Posterior vena cava (tissue), 2 donors: ENCODE measurements at regions of chr3 and their contacts with region 1.

Region 1: GRCh38 chr3:112582244-112582874 is 20.5 kb downstream of the SLC35A5 start:
- DNase-seq: no peak

Region 2: DNA sequence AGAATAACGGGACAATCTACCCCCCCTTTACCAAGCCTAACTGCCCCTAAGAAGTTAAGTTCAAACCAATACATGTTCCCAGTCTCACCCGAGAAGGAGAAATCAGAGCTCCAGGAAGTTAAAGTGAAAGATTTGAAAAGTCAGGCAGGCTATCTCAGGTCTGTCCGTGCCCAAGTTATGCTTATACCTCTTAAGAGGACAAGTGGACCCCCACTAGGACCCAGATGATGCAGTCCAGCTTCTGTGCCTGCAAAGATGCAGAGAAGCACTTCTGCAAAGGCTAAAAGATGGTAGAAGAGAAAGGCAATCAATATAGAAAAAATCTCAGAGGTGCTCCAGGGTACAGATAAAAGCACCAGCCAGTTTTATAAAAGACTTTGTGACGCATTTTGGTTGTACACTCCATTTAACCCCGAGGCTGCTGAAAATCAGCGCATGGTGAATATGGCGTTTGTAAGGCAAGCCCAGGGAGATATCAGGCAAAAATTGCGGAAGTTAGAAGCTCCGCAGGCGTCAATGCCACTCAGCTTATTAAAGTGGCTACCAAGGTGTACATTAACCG is 278.5 kb before region 1 on chr3:
- intact Hi-C with region 1: no loop called
- DNase-seq: no peak

Region 3: GRCh38 chr3:112635671-112636070 is 53.3 kb after region 1 on chr3:
- intact Hi-C with region 1: loop called in 1 of 2 experiments (anchors 10 kb)
- DNase-seq: no peak

Region 4: GRCh38 chr3:112814266-112814665 is 231.9 kb after region 1 on chr3:
- intact Hi-C with region 1: loop called in 1 of 2 experiments (anchors 10 kb)
- DNase-seq: no peak

Region 5: GRCh38 chr3:112984485-112984884 is 402.1 kb after region 1 on chr3:
- intact Hi-C with region 1: loop called in 1 of 2 experiments (anchors 10 kb)
- DNase-seq: no peak